Ascending aorta (tissue), 2 donors: ENCODE measurements at regions of chr15 and their contacts with region 1.

Region 1: GRCh38 chr15:89654847-89655805 is at the start of gene KIF7:
- DNase-seq: no peak
- H3K4me3 ChIP-seq: peak within 1 kb of the TSS; percentile 78 to 80
- H3K27ac ChIP-seq: peak within 1 kb of the TSS; percentile 76 to 83
- H3K4me1 ChIP-seq: peaks cover 3 to 7% of the 10 kb centered on the region in 2 donors
- H3K27me3 ChIP-seq: no peaks in the 10 kb centered on the region
- CTCF ChIP-seq: peak in 1 of 3 experiments; percentile 5
- total RNA-seq, gene KIF7: 39.1 TPM

Region 2: DNA sequence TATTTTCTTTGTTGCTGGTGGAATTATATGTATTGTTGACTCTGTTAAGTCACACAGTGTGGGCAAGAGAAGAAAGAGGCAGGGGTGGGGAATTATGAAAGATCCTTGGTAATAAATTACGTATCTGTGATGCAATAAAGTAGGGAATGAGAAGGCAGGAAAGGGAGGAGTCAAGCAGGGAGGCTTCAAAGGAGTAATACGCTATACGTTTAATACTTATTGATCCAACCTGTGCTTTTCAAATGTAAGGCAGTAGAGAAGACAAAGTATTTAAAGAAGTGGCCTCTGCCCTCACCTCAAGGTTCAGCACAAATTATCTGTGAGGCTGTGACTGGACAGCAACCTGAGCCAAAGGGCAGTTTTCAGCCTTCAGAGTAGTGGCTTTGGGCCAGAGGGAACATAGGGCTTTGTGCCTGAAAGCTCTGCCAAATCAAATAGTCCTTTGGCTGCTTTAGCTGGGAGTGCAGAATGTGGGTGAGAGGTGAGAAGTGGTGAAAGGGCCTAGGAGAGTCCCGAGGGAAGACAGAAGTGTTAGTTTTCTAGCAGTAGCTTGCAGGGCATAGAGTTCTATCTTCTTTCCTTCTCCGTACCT is 25.3 kb after region 1 on chr15:
- intact Hi-C with region 1: loop called (anchors 2 kb)
- DNase-seq: peak in 1 of 2 donors; percentile 93
- H3K4me3 ChIP-seq: no peak overlapping the region
- H3K27ac ChIP-seq: peak overlapping the region; percentile 66 to 82
- H3K4me1 ChIP-seq: peaks cover 0 to 32% of the 10 kb centered on the region in 2 donors
- H3K27me3 ChIP-seq: no peaks in the 10 kb centered on the region
- CTCF ChIP-seq: no peak